Heart right ventricle (tissue), 16 donors: ENCODE measurements at regions of chr10 and their contacts with region 1.

Region 1: DNA sequence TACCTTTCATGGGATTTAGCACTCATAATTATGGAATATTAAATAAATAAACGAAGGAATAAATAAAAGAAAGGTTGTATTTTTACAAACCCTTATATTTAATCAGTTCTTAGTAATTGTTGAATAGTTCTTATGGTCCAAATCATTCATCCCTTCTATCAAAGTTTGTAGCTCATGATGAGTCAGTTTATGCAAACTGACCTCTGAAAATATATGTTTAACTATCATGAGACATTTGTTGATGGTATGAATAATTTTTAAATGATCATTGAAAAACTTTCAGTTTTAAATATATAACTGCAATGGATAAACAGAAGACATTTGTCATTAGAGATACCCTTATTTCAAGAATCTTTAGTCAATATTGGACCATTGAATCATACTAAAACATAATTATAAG is 411.2 kb upstream of the LRRTM3 start:
- DNase-seq: no peak
- ATAC-seq: no peak
- H3K4me3 ChIP-seq: no peak overlapping the region
- H3K27ac ChIP-seq: no peak overlapping the region
- H3K4me1 ChIP-seq: no peaks in the 10 kb centered on the region
- H3K27me3 ChIP-seq: no peaks in the 10 kb centered on the region
- CTCF ChIP-seq: no peak

Region 2: DNA sequence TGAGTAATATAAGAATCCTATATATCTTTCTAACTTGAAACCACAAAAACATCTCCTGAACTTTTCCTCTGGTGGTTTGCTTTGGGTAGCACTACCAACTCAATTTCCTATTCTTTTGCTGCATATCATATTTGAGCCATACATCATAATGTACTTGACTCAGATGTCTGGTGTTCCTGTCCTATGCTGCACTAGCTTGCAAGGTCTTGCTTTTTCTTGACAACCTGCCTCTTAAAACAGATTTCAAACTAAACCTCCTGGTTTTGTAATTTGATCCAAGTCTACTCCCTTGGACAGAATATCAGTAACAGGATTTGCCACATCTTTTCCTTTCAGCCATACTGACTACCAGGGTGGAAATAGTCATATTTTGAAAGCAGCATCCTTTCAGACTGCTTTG is 109.1 kb before region 1 on chr10:
- intact Hi-C with region 1: no loop called
- DNase-seq: no peak
- ATAC-seq: no peak
- H3K4me3 ChIP-seq: no peak overlapping the region
- H3K27ac ChIP-seq: no peak overlapping the region
- H3K4me1 ChIP-seq: no peaks in the 10 kb centered on the region
- H3K27me3 ChIP-seq: no peaks in the 10 kb centered on the region
- CTCF ChIP-seq: no peak

Region 3: DNA sequence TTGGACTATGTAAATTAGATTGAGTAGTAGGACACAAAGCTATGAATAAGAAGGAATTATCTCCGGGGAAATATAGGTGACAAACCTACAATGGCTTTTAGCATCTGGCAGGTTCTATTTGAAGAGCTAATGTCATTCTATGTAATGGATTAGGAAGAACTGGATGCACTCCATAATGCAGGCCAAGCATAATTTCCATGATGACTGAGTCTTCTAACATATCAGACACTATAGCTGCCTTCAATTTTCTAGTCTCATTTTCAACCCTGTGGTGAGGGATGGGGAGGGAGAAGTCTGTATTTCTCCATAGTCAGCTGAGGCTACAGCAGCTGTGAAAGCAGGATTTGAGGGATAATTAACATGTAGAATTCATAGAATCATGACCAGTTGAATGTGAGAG is 20.8 kb after region 1 on chr10:
- intact Hi-C with region 1: loop called in 1 of 10 experiments (anchors 1 kb)
- DNase-seq: no peak
- ATAC-seq: no peak
- H3K4me3 ChIP-seq: no peak overlapping the region
- H3K27ac ChIP-seq: no peak overlapping the region
- H3K4me1 ChIP-seq: peaks cover 0 to 14% (median 0%) of the 10 kb centered on the region in 9 donors
- H3K27me3 ChIP-seq: no peaks in the 10 kb centered on the region
- CTCF ChIP-seq: no peak

Region 4: GRCh38 chr10:66564287-66564686 is 49.6 kb after region 1 on chr10:
- intact Hi-C with region 1: no loop called
- DNase-seq: no peak
- ATAC-seq: no peak
- H3K4me3 ChIP-seq: no peak overlapping the region
- H3K27ac ChIP-seq: no peak overlapping the region
- H3K4me1 ChIP-seq: peaks cover 0 to 15% (median 0%) of the 10 kb centered on the region in 9 donors
- H3K27me3 ChIP-seq: no peaks in the 10 kb centered on the region
- CTCF ChIP-seq: no peak